Activated naive CD4-positive, alpha-beta T cell treated with anti-CD3 and anti-CD28 coated beads, Interleukin-2, amount 10 ng/mL, durations not matched to agents 7 days and 5 days (primary cell): ENCODE measurements at regions of chr1 and their contacts with region 1.

Region 1: GRCh38 chr1:45348716-45349677 is 8.8 kb upstream of the MUTYH start:
- DNase-seq: no peak
- H3K4me3 Mint-ChIP-seq: no peak overlapping the region
- H3K27ac Mint-ChIP-seq: no peak overlapping the region
- H3K4me1 Mint-ChIP-seq: no peaks in the 10 kb centered on the region
- H3K27me3 Mint-ChIP-seq: no peaks in the 10 kb centered on the region

Region 2: GRCh38 chr1:45359882-45360513 is 11.0 kb after region 1 on chr1:
- CTCF ChIA-PET with region 1: interaction called, 20 read pairs
- DNase-seq: peak; percentile 65
- H3K4me3 Mint-ChIP-seq: no peak overlapping the region
- H3K27ac Mint-ChIP-seq: no peak overlapping the region
- H3K4me1 Mint-ChIP-seq: peaks cover 5% of the 10 kb centered on the region
- H3K27me3 Mint-ChIP-seq: no peaks in the 10 kb centered on the region